Mammary epithelial cell (primary cell): ENCODE measurements at regions of chr12 and their contacts with region 1.

Region 1: GRCh38 chr12:108618079-108618952 is 15.4 kb downstream of the SELPLG start:
- DNase-seq: peak; percentile 57
- H3K4me3 ChIP-seq: no peak overlapping the region
- H3K27ac ChIP-seq: no peak overlapping the region
- H3K4me1 ChIP-seq: peaks cover 6% of the 10 kb centered on the region
- H3K27me3 ChIP-seq: no peaks in the 10 kb centered on the region
- CTCF ChIP-seq: peak; percentile 72 to 97

Region 2: DNA sequence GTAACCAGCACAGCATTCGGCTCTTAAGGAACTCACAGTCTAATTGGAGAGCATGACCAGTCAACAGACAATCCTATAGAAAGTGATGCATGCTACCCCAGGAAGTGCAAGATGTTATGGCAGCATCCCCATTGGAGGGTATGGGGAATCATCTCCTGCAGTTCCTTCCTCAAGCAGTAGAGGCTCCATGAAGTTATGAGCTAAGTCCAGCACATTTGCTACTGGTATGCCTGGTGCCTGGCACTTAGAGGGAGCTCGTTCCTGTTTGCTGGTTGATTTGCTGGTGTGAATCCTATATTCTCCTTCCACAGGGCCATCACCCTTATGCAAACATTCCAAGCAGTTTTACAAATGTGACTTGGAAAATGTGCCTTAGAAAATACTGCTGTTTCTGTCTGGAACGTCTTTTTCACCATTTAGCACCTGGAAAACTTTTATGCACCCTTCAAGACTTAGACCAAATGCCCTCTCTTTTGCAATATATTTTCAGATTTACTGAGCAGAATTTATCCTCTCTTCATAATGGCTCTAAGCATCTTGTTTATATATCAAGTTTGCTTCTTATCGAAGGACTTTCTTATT is 625.4 kb before region 1 on chr12:
- CTCF ChIA-PET with region 1: no interaction called
- dilution Hi-C with region 1: no loop called
- in situ Hi-C with region 1: no loop called
- intact Hi-C with region 1: loop called (anchors 5 kb)
- DNase-seq: peak; percentile 54
- H3K4me3 ChIP-seq: no peak overlapping the region
- H3K27ac ChIP-seq: no peak overlapping the region
- H3K4me1 ChIP-seq: no peaks in the 10 kb centered on the region
- H3K27me3 ChIP-seq: no peaks in the 10 kb centered on the region
- CTCF ChIP-seq: peak; percentile 43 to 71

Region 3: DNA sequence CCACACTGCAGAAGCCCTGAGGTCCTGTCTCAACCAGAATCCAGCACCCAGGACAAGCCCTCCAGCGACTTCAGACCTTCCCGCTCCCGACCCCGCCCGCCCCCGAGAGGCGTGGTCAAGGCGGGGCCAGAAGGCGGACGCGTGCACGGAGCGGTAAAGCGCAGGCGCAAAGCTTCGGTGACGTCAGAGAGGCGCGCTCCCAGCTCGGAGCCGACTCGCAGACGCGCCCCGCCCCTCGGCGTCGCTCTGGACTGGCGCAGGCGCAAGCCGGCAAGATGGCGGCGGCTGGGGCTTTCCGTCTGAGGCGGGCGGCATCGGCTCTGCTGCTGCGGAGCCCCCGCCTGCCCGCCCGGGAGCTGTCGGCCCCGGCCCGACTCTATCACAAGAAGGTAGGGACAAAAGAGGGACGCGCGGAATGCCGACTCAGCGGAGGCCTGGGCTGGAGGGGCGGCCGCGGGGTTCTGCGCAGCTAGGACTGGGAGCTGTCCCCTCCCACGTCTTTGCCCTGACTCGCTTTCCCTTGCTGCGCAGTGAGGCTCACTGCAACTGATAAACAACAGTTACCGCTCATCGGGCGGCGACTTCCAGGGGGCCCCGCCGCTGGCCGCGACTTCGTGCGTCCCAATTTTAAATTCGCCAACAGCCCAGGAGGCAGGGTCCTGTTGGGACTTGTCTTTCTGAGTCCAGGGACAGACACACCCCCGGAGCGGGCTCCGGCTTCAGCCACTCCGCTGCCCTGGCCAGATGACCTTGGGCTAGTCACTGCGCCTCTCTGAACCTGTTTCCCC is 55.8 kb before region 1 on chr12 and contains the start of gene ISCU:
- CTCF ChIA-PET with region 1: no interaction called
- dilution Hi-C with region 1: no loop called
- in situ Hi-C with region 1: loop called (anchors 5 kb)
- intact Hi-C with region 1: loop called (anchors 1 kb)
- DNase-seq: peak; percentile 96
- H3K4me3 ChIP-seq: peak within 1 kb of the TSS; percentile 88
- H3K27ac ChIP-seq: peak within 1 kb of the TSS; percentile 93
- H3K4me1 ChIP-seq: peaks cover 30% of the 10 kb centered on the region
- H3K27me3 ChIP-seq: no peaks in the 10 kb centered on the region
- CTCF ChIP-seq: no peak
- total RNA-seq, gene ISCU: 55.3 to 77.6 TPM

Region 4: DNA sequence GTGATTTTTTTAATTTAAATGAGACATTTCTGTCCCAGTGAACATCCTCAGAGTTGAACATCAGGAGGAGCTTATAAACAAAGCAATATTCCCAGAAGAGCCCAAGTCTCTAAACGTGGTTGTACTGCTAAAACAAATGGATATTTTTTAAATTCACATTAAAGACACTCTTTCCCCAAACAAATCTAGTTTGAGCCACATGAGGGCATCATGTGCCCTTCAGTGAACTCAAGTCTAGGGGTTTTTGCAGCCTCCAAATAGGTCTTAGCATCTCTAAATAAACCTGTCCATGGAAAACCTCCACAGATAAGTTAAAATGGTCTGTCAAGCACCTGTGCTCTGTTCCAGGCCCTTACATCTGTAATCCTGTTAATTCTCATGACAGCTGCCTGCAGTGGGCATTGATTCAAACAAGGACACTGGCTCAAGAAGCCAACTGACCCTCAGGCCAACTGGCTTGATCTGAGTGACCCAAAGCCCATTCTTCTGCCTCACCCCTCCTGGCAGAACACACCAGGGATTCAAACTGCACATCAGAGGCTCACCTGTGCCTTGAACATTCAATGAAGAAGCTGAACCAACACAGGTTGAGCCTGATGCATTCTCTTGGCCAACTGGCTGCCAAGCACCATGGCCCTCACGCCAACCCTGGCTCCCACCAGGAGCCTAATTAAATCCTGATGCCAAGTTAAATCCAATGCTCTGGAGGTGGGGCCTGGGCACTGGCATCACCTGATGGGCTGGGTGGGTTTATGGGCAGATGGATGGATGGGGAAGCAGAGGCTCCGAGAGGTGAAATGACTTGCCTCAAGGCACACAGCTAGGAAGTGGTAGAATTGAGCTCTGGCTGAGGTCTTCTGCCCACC is 47.3 kb before region 1 on chr12:
- CTCF ChIA-PET with region 1: no interaction called
- dilution Hi-C with region 1: no loop called
- in situ Hi-C with region 1: loop called in 1 of 2 experiments (anchors 5 kb)
- intact Hi-C with region 1: loop called (anchors 1 kb)
- DNase-seq: no peak
- H3K4me3 ChIP-seq: no peak overlapping the region
- H3K27ac ChIP-seq: no peak overlapping the region
- H3K4me1 ChIP-seq: peaks cover 7% of the 10 kb centered on the region
- H3K27me3 ChIP-seq: no peaks in the 10 kb centered on the region
- CTCF ChIP-seq: peak; percentile 19 to 30